ENCODE measurements at regions of chr19 and their contacts with region 1.

Region 1: DNA sequence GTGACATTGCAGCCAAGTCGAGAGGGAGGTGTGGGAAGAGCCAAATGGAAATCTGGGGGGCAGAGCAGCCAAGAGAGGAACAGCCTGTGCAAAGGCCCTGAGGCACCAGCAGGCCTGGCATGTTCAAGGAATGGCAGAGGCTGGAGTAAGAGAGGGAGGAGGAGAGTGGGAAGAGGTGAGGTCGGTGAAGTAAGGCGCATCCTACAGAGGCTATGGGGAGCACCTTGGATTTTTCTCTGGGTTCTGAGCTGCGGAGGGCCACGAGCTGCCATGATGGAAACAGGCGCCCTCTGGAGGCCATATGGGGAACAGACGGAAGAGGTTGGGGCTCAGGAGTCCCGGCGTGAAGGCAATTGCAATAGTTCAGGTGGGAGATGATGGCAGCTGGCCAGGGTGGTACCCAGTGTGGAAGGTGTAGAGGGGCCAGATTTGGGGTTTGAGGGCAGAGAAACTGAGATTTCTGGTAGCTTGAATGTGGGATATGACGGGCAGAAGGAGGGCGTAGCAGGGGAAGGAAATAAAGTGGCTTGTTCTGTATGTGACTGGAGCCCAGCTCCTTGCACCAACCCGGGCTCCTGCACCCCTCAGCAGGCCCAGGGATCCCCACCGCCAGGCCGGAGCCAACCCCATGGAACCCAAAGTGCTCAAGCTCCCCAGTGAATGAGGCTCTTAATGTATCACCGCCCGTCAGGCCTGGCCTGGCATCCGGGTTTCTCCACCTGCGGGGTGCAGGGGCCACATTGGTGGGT is 20.5 kb upstream of the STRN4 start:
- DNase-seq: peak; percentile 79
- ATAC-seq: peak; percentile 96
- H3K4me3 Mint-ChIP-seq: no peak overlapping the region
- H3K27ac Mint-ChIP-seq: no peak overlapping the region
- H3K4me1 Mint-ChIP-seq: no peaks in the 10 kb centered on the region
- H3K27me3 Mint-ChIP-seq: no peaks in the 10 kb centered on the region
- CTCF ChIP-seq: peak; percentile 81

Region 2: DNA sequence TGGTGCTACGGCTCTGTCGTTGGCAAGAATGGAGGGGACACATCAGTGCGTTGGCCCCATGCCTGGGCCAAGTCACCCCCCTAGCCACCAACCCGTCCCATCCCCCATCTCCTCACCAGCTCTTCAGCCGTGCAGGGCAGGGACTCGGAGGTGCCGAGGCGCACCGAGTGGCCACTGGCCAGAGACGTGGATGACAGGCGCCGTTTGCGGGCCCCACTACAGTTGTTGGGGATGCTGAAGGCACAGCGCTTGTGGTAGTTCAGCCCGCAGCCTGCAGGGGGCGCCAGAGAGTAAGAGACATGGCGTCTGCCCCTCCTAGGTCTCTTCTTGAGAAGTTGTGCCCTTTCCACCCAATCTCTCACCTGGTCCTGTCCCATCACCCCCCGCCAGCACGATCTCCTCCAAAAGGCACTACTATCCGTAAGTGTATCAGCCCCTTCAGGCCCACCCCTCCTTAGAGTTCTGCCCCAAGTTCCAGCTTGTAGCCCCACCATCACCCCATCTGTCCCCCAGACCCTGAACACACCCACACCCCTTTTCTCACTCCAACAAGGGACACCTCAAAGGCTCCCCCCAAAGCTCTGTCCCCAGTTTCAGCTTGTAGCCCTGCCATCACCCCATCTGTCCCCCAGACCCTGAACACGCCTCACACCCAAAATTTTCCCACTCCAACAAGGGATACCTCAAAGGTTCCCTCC is 62.2 kb before region 1 on chr19:
- CTCF ChIA-PET with region 1: interaction called, 20 read pairs
- POLR2A ChIA-PET with region 1: no interaction called
- intact Hi-C with region 1: no loop called
- DNase-seq: peak; percentile 94
- ATAC-seq: peak; percentile 98
- H3K4me3 Mint-ChIP-seq: no peak overlapping the region
- H3K27ac Mint-ChIP-seq: peak overlapping the region; percentile 57
- H3K4me1 Mint-ChIP-seq: peaks cover 7% of the 10 kb centered on the region
- H3K27me3 Mint-ChIP-seq: no peaks in the 10 kb centered on the region
- CTCF ChIP-seq: peak; percentile 95

Region 3: DNA sequence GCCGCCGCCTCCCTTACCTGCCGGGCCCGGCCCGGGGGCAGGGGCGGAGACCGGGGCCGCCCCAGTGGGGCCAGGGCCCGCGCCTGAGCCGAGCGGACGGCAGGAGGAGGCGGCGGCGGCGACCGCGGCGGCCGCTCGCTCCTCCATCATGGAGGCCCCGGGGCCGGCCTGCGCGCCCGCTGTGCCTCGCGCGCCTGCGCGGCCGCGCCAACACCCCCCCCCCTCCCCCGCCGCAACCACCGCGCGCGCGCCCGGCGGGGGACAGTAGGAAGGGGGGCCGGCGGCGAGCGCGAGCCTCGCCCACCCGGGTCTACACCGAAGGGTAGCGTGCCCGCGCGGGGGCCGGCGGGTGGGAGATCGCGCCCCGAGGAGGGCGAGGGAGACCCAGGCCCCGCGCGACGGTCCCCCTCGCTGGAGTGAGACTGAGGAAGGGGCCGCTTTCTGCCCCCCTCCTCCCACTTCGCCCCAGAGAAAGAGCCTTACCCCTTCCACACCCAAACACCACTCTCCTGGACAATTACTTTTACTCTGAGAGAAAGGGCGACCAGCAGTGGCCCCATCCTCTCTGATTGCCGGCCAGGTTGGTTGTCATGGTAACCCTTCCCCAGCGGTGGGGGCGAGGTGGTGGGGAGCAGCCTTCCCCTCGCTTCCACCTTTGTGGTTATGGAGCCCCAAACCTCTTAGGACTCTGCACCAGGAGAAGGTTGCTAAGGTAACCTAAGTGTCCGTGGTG is 20.3 kb before region 1 on chr19 and contains the start of gene STRN4:
- CTCF ChIA-PET with region 1: interaction called, 26 read pairs
- POLR2A ChIA-PET with region 1: interaction called, 3 read pairs
- intact Hi-C with region 1: no loop called
- DNase-seq: peak; percentile 63
- ATAC-seq: peak; percentile 81
- H3K4me3 Mint-ChIP-seq: peak within 1 kb of the TSS; percentile 91
- H3K27ac Mint-ChIP-seq: peak within 1 kb of the TSS; percentile 88
- H3K4me1 Mint-ChIP-seq: peaks cover 47% of the 10 kb centered on the region
- H3K27me3 Mint-ChIP-seq: no peaks in the 10 kb centered on the region
- CTCF ChIP-seq: no peak
- total RNA-seq, gene STRN4: 52.5 to 63.5 TPM

Region 4: DNA sequence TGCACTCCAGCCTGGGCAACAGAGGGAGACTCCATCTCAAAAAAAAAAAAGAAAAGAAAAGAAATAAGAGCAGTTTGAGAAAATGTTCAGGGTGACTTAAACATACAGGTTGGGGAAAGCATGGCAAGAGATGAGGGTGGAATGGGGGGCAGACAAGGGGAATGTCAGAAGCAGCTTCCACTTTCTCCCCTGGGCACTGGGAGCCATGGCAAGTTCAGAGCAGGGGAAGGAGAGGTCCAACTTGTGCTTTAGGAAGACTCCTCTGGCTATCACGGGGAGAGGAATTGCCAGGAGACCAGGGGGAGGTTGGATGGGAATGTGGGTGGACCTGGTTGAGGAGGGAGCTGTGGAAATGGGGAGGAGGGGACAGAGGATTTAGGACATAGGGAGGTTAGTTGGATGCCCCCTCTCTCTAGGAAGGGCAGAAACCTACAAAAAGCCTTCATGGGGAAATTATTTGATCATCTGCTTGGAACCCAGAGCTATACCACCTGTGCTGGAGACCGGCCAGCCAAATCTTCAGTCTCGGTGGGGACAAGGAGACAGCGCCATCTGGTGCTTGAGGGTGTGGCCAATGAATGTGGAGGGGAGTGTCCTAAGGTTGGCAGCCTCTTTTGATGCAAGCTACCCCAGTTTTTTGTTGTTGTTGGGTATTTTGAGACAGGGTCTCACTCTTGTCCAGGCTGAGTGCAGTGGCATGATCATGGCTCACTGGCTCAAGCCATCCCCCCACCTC is 13.2 kb before region 1 on chr19:
- CTCF ChIA-PET with region 1: interaction called, 26 read pairs
- POLR2A ChIA-PET with region 1: interaction called, 5 read pairs
- intact Hi-C with region 1: no loop called
- DNase-seq: peak; percentile 85
- ATAC-seq: peak; percentile 92
- H3K4me3 Mint-ChIP-seq: no peak overlapping the region
- H3K27ac Mint-ChIP-seq: no peak overlapping the region
- H3K4me1 Mint-ChIP-seq: peaks cover 8% of the 10 kb centered on the region
- H3K27me3 Mint-ChIP-seq: no peaks in the 10 kb centered on the region
- CTCF ChIP-seq: peak; percentile 13

Region 5: DNA sequence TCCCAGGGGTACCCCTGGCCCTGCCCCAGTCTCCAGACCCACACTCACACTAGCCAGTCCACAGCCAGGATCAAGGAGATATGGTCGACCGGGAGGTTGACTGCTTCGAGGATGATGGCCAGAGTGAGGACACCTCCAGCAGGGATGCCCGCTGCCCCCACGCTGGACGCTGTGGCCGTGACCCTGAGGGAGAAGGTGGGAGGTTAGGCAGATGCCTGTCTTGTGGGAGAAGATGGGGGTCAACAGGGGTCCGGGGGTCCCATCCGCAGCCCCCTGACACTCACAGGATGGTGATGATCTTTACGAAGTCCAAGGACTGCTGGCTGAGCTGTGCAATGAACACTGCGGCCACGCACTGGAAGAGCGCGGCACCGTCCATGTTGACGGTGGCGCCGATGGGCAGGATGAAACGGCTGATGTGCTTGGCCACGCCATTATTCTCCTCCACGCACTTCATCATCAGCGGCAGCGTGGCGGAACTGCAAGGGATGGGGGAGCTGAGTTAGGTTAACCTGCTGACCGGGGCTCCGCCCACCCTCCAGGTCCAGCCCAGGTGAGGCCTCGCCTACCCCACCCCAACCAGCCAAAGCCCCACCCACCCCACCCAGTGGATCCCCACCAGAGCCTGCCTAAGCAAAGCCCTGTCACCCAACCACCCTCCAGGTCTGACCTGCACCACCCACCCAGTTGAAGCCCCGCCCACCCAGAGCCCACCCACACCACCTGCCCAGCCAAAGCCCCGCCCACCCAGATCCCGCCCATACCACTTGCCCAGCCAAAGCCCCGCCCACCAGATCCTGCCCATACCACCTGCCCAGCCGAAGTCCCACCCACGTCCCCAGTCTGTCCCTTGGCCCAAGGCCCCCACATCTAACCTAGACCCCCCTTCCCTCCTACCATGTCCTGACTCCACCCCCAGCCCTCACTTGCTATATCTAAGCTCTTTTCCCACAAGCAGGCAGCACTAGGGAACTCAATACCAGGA is 10.5 kb after region 1 on chr19:
- CTCF ChIA-PET with region 1: interaction called, 18 read pairs
- POLR2A ChIA-PET with region 1: interaction called, 4 read pairs
- intact Hi-C with region 1: no loop called
- DNase-seq: peak; percentile 45
- ATAC-seq: peak; percentile 43
- H3K4me3 Mint-ChIP-seq: no peak overlapping the region
- H3K27ac Mint-ChIP-seq: peak overlapping the region; percentile 42
- H3K4me1 Mint-ChIP-seq: peaks cover 22% of the 10 kb centered on the region
- H3K27me3 Mint-ChIP-seq: no peaks in the 10 kb centered on the region
- CTCF ChIP-seq: no peak

Region 6: DNA sequence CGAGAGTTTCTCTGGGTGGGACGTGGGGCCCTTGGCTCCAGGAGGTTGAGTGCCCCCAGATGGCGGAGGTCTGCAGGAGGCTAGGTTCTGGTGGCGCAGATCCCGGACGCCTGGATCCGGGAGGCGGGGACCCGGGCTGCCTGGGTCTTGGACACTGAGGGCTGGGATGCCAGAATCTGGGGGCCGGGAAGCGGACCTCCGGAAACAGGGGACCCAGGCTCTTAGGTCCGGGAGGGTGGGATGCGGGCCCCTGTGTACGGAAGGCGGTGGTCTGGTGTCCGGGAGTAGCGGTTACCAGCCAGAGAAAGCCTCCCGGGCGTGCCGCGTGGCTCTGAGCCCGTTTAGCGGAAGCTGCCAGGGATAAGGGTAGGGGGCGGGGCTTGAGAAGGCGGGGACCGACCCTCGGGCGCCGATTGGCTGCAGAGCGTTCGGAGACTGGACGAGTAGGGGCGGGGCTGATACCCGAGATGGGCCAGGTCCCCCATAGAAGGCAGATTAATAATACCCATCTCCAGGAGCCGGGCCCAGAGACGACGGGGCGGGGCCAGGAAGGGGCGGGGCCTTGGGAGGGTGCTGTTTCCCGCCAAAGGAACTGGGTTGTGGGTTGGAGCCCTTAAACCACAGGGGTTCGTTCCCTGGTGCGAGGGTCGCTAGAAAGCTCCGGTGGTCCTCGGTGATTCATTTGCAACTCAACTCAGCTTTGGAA is 21.7 kb after region 1 on chr19 and contains the start of gene SLC1A5:
- CTCF ChIA-PET with region 1: interaction called, 30 read pairs
- POLR2A ChIA-PET with region 1: interaction called, 7 read pairs
- intact Hi-C with region 1: no loop called
- DNase-seq: peak; percentile 99
- ATAC-seq: peak; percentile 83
- H3K4me3 Mint-ChIP-seq: peak within 1 kb of the TSS; percentile 98
- H3K27ac Mint-ChIP-seq: peak within 1 kb of the TSS; percentile 98
- H3K4me1 Mint-ChIP-seq: peaks cover 29% of the 10 kb centered on the region
- H3K27me3 Mint-ChIP-seq: no peaks in the 10 kb centered on the region
- CTCF ChIP-seq: no peak
- total RNA-seq, gene SLC1A5: 235 TPM